Naive thymus-derived CD4-positive, alpha-beta T cell (primary cell): ENCODE measurements at regions of chr15 and their contacts with region 1.

Region 1: DNA sequence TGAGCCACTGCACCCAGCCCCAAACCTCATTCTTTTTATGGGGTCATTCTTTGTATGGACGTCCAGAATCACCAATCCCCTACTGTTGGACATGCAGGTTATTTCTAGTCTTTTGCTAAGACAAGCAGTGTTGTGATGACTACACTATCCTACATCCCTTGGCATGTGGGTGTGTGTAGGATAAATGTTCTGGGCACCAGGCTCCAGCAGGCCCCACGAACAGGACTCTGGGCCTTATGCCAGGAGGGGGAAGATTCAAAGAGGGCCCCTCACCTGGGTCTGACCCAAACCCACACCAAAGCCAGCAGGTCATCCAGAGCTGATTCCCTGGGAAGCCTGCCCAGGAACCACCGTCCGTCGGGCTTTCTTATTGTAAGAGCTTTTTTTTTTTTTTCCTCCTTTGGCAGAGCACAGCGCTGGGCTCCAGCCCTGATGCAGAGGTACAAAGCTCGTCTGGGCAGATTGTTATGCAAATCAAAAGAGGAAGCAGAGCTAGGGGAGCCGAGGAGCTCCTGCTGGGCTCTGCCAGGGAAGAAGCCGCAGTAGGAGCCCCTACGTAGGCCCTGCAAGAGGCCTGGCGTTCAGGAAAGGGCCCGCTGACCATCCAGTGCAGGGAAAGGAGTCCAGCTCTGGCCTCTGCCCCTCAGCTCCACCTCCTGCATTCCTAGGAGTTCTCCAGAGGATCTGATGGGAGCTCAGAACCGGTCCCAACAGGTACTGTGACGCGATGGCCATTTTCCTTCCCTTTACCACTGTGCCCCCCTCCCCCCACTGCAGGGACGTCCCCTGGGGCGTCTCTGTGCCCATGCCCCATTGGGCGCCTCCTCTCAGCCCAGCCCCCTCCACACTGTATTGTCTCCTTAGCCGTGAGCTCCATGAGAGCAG is 29.0 kb upstream of the FURIN start:
- DNase-seq: peak in 1 of 9 donors; percentile 28
- ATAC-seq: no peak
- H3K4me3 ChIP-seq: peak overlapping the region; percentile 2
- H3K4me3 Mint-ChIP-seq: peak overlapping the region; percentile 32 to 78 (median 58)
- H3K27ac ChIP-seq: peak overlapping the region; percentile 35
- H3K27ac Mint-ChIP-seq: peak overlapping the region in 8 of 9 donors; percentile 53 to 91 (median 79)
- H3K4me1 ChIP-seq: peaks cover 18 to 27% of the 10 kb centered on the region in 2 donors
- H3K4me1 Mint-ChIP-seq: peaks cover 21 to 86% (median 30%) of the 10 kb centered on the region in 7 donors
- H3K27me3 ChIP-seq: no peaks in the 10 kb centered on the region
- H3K27me3 Mint-ChIP-seq: no peaks in the 10 kb centered on the region

Region 2: DNA sequence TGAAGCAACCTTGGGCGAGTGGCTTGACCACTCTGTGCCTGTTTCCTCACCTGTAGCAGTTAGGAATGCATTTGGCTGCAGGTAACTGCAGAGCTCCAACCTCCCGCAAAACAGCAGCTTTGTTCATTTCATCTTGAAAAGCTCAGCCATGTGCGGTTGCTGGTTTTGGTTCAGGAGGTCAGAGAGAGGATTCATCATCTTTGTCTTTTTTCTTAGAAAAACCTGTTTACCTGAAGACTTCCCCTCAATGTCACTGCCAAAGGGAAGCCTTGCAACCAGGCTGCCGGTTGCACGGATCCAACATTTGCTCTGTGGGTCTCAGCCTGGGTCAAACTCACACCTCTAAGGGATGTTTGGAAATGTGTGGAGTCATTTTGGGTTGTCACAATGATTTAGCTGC is 12.5 kb after region 1 on chr15:
- CTCF ChIA-PET with region 1: no interaction called
- POLR2A ChIA-PET with region 1: interaction called, 4 read pairs
- intact Hi-C with region 1: loop called in 1 of 2 experiments (anchors 1 kb)
- DNase-seq: no peak
- ATAC-seq: no peak
- H3K4me3 ChIP-seq: no peak overlapping the region
- H3K4me3 Mint-ChIP-seq: peak overlapping the region in 7 of 10 donors; percentile 18 to 87 (median 52)
- H3K27ac ChIP-seq: no peak overlapping the region
- H3K27ac Mint-ChIP-seq: peak overlapping the region in 5 of 9 donors; percentile 27 to 92 (median 54)
- H3K4me1 ChIP-seq: peaks cover 19 to 21% of the 10 kb centered on the region in 2 donors
- H3K4me1 Mint-ChIP-seq: peaks cover 24 to 78% (median 38%) of the 10 kb centered on the region in 7 donors
- H3K27me3 ChIP-seq: no peaks in the 10 kb centered on the region
- H3K27me3 Mint-ChIP-seq: peaks cover 0 to 6% (median 0%) of the 10 kb centered on the region in 5 donors

Region 3: DNA sequence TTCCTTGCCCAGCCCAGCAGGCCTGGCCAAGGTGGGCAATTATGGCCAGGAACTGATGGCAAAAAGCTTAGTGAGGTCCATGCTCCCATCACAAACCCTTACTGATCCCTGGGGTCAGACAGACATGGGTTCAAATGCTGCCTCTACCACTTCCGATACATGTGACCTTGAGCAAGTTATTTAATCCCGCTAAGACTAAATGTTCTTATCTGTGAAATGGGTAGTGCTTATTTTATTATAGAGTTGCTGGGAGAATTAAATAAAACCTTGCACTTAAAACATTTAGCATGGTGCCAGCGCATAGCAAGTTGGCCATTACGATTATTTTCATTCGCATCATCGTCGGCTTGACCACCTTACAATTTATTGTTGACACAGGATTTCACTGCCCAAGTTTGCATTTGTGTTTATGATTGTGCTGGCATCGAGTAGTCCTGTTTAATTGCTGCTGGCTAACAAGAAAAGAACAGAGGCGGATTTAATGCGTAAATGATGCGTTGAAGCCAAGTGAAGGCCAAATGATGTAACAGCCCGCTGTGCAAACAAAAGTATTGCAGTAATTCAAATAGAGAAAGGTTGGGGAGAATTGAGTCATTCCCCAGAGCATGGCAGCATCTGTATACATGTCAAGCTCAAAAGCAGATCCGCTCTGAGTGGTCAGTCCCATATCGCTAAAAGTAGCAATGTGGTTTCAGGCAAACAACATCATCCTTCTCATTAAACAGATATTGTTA is 21.7 kb after region 1 on chr15:
- CTCF ChIA-PET with region 1: no interaction called
- POLR2A ChIA-PET with region 1: no interaction called
- intact Hi-C with region 1: loop called in 1 of 2 experiments (anchors 1 kb)
- DNase-seq: no peak
- ATAC-seq: no peak
- H3K4me3 ChIP-seq: no peak overlapping the region
- H3K4me3 Mint-ChIP-seq: no peak overlapping the region
- H3K27ac ChIP-seq: no peak overlapping the region
- H3K27ac Mint-ChIP-seq: peak overlapping the region in 1 of 9 donors; percentile 53
- H3K4me1 ChIP-seq: peaks cover 8 to 9% of the 10 kb centered on the region in 2 donors
- H3K4me1 Mint-ChIP-seq: peaks cover 0 to 65% (median 15%) of the 10 kb centered on the region in 7 donors
- H3K27me3 ChIP-seq: no peaks in the 10 kb centered on the region
- H3K27me3 Mint-ChIP-seq: no peaks in the 10 kb centered on the region

Region 4: GRCh38 chr15:90869601-90870353 is 30.3 kb after region 1 on chr15:
- CTCF ChIA-PET with region 1: interaction called, 6 read pairs
- POLR2A ChIA-PET with region 1: interaction called, 5 read pairs
- intact Hi-C with region 1: loop called (anchors 1 kb)
- DNase-seq: peak in 1 of 9 donors; percentile 67
- ATAC-seq: peak; percentile 73
- H3K4me3 ChIP-seq: peak overlapping the region; percentile 53
- H3K4me3 Mint-ChIP-seq: peak overlapping the region; percentile 82 to 93 (median 90)
- H3K27ac ChIP-seq: peak overlapping the region; percentile 73
- H3K27ac Mint-ChIP-seq: peak overlapping the region; percentile 82 to 97 (median 92)
- H3K4me1 ChIP-seq: peaks cover 27% of the 10 kb centered on the region in 2 donors
- H3K4me1 Mint-ChIP-seq: peaks cover 22 to 66% (median 45%) of the 10 kb centered on the region in 7 donors
- H3K27me3 ChIP-seq: no peaks in the 10 kb centered on the region
- H3K27me3 Mint-ChIP-seq: no peaks in the 10 kb centered on the region